Panc1 (cell line): ENCODE measurements at regions of chr11 and their contacts with region 1.

Region 1: DNA sequence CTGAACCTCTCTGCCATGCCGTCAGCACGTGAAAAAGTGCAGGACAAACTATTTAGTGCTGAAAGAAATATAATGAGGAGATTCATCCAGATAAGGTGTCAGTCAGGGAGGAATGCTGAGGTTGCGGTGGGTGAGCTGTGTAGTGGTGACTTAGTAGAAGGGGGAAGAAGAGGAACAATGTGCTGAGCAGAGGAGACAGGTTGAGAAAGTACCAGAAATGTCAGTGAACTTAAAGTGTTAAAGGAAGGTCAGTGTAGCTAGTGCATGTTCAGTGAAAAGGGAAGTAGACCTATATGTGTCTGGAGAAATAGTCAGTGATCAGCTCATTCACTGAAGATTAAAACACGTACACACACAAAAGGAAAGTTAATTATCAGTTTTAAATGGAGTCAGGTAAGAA is 237.6 kb upstream of the CCDC179 start:
- DNase-seq: no peak
- ATAC-seq: no peak
- H3K4me3 ChIP-seq: no peak overlapping the region
- H3K27ac ChIP-seq: no peak overlapping the region
- H3K4me1 ChIP-seq: no peaks in the 10 kb centered on the region
- H3K27me3 ChIP-seq: no peaks in the 10 kb centered on the region
- CTCF ChIP-seq: no peak

Region 2: DNA sequence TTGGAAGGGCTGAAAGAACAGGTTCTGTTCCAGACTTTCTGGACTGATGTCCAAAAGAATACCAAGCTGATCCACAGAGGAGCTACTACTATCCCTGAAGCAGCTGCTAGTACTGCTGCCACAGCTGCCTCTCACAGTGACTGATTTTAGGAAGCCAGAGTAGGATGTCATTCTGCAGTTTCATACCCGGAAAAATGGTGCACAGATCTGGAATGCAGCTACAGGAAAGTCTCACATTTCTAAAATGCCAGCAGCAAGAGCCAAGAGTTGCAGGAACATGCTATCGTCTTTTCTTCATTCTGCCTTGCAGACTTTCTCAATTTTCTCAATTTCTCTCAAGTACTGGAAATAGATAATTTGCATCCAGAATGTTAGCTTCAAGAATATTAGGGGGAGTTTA is 218.3 kb before region 1 on chr11:
- CTCF ChIA-PET with region 1: no interaction called
- POLR2A ChIA-PET with region 1: no interaction called
- in situ Hi-C with region 1: no loop called
- intact Hi-C with region 1: loop called (anchors 10 kb)
- DNase-seq: no peak
- ATAC-seq: no peak
- H3K4me3 ChIP-seq: no peak overlapping the region
- H3K27ac ChIP-seq: no peak overlapping the region
- H3K4me1 ChIP-seq: no peaks in the 10 kb centered on the region
- H3K27me3 ChIP-seq: no peaks in the 10 kb centered on the region
- CTCF ChIP-seq: no peak